Dorsolateral prefrontal cortex (tissue), 120 donors: ENCODE measurements at regions of chr3 and their contacts with region 1.

Region 1: DNA sequence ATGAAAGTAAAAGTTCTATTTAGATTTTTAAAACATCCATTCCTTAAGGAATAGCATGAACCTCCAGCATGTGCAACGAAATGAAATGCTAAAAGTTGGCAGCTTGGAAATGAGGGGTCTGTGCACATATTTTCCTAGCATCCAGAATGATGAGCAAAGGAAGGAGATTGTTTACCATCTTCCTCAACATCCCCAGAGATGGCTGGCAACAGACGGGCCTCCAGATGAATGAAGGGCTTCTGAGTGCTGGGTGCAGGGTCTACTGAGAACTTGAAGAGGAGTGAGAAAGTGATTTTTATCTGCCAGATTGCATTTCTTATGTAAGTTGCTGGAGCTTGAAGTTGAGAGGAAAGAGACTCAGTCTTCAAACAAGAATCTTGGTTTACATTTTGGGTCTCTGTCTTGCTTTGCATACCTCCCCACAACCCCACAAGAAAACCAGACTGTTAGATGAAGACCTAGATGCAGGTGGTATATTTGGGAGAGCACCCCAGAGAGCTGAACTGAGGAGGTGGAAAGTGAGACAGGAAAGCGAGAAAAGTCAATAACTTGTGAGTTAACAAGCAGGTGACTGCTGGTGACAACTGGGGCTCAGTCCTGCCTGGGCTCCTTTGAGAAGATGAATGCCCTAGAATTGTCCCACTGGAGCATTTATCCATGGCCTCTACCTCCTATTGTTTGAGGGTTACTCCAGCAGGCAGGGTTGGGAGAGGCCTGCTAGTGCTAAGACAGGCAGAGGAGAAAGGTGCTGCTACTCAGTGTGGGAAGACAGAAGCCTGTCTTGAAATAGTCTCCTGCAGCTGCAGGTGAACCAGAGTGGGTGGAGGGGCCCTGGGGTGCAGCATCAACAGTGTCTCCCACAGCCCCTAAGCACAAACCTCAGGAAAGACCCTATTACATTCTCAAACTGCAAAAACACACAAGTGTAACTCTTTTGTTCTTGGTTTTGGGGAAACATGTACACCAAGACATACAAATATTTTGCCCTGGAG is 10.5 kb upstream of the CCK start:
- DNase-seq: no peak
- H3K4me3 ChIP-seq: no peak overlapping the region
- H3K27ac ChIP-seq: peak overlapping the region in 50 of 59 donors; percentile 4 to 86 (median 53)
- H3K27me3 ChIP-seq: no peaks in the 10 kb centered on the region
- CTCF ChIP-seq: no peak

Region 2: DNA sequence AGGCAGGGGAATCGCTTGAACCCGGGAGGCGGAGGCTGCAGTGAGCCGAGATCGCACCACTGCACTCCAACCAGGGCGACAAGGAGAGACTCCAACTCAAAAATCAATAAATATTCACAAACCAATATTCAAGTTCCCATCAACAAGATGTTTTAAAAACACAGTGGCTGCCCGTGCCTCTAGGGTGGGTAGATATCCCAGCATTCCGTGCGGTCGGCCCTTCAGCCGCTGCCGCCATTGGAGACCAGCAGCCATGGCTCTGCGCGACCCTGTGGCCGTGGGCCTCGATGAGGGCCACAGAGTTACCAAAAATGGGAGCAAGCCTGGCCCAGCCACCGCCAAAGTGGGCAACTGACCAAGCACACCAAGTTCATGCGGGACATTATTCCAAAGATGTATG is 321.2 kb before region 1 on chr3:
- intact Hi-C with region 1: no loop called
- DNase-seq: no peak
- H3K4me3 ChIP-seq: no peak overlapping the region
- H3K27ac ChIP-seq: no peak overlapping the region
- H3K27me3 ChIP-seq: no peaks in the 10 kb centered on the region
- CTCF ChIP-seq: no peak

Region 3: GRCh38 chr3:42376344-42376798 is 99.9 kb after region 1 on chr3:
- intact Hi-C with region 1: loop called in 1 of 2 experiments (anchors 10 kb)
- DNase-seq: peak in 8 of 10 donors; percentile 36 to 78 (median 64)
- H3K4me3 ChIP-seq: no peak overlapping the region
- H3K27ac ChIP-seq: peak overlapping the region in 46 of 59 donors; percentile 2 to 85 (median 54)
- H3K27me3 ChIP-seq: no peaks in the 10 kb centered on the region
- CTCF ChIP-seq: no peak

Region 4: DNA sequence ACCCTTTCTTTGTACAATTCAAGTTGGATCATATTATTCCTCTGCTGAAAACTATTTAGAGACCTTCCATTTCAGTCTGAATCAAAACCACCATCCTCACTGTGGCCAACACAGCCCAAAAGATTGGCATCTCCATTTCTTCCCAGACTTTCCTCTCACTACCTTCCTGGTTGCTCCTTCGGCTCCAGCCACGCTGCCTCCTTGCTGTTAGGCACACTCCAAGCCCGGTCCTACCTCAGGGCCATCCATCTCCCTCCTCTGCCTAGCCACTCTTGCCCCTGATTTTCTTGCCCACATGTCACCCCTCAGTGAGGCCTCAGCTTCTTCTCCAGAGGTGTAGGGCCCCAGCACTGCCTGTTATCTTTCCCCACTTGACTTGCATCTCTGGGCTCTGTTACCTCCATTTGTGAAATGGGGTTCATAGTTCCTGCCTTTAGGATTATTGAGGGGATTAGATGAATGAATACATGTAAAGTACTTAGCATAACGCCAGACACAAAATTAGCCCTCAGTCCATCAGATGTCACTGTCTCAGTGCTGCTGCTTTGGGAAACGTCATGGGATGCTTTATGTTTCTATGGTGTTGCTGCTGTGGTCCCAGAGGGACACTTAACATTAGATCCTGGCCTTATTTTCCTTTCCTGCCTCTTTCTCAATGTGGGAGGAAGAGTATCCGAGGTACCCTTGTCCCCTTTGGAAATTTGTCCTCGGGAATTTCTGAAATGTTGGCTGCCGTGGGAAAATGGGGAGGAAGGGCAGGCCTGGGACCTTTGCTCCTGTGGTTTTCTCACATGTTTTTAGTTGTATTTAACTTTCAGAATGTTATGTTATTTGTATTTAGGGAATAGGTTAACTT is 1041.3 kb after region 1 on chr3:
- intact Hi-C with region 1: no loop called
- DNase-seq: no peak
- H3K4me3 ChIP-seq: no peak overlapping the region
- H3K27ac ChIP-seq: peak overlapping the region in 48 of 59 donors; percentile 3 to 82 (median 52)
- H3K27me3 ChIP-seq: no peaks in the 10 kb centered on the region
- CTCF ChIP-seq: no peak